HCT116 (cell line): ENCODE measurements at regions of chr2 and their contacts with region 1.

Region 1: GRCh38 chr2:141611-142010 is 95.3 kb upstream of the FAM110C start:
- DNase-seq: no peak
- ATAC-seq: no peak
- H3K4me3 ChIP-seq: no peak overlapping the region
- H3K27ac ChIP-seq: no peak overlapping the region
- H3K4me1 ChIP-seq: peaks cover 0 to 5% of the 10 kb centered on the region in 2 experiments; a peak in 2 of 4 replicates
- H3K27me3 ChIP-seq: peaks cover 6% of the 10 kb centered on the region; the same call in 1 of the 2 replicates
- CTCF ChIP-seq: no peak
- POLR2A ChIP-seq: no peak
- RAD21 ChIP-seq: no peak

Region 2: GRCh38 chr2:11248-11941 is 130.2 kb before region 1 on chr2:
- CTCF ChIA-PET with region 1: interaction called, 15 read pairs
- POLR2A ChIA-PET with region 1: no interaction called
- RAD21 ChIA-PET with region 1: interaction called in 1 of 2 experiments, 7 read pairs
- intact Hi-C with region 1: no loop called
- DNase-seq: peak; percentile 75
- ATAC-seq: peak; percentile 94
- H3K4me3 ChIP-seq: no peak overlapping the region
- H3K27ac ChIP-seq: no peak overlapping the region
- H3K4me1 ChIP-seq: no peaks in the 10 kb centered on the region
- H3K27me3 ChIP-seq: no peaks in the 10 kb centered on the region
- CTCF ChIP-seq: peak; percentile 95 to 99 (median 99)
- POLR2A ChIP-seq: no peak
- RAD21 ChIP-seq: peak; percentile 57

Region 3: DNA sequence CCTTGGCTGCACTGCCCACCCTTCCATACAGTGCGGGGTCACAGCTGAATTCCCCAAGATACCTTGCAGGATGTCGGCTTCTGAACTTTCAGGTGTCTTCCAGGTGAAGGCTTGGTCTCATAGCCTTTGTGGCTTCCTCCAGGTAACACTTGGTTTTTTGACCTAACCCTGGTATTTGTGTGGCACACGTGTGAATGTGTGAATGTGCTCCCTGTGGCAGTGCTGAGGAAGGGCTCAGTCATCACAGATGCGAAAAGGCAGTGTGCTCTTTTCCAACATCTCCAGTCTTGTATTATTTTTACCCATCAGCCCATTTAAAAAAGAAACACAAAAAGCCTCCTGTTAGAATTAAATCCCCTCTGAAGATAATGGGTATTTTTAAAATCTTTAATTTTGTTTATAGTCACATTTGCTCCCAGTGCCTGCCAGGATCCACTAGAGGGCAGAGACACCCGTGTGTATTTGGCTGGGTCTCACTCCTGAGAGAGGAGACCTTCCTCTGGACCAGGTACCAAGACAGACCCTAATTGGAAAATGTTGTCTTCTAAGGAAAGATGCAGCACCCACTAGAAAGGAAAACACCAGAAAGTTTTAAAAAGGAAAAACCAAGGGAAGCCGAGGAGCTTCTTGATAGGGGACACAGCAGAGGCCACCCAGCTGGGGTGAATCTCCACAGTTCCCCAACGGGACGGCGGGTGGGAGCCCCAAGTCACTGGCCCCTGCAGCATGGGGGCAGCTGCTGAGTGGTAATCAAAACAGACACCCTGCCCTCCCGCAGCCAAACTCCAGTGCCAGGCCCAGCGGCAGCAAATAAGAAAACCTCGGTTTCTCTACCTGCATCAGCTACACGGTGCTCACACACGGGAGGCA is 123.0 kb before region 1 on chr2:
- CTCF ChIA-PET with region 1: interaction called, 41 read pairs
- POLR2A ChIA-PET with region 1: interaction called, 4 read pairs
- RAD21 ChIA-PET with region 1: interaction called, 6 to 7 read pairs
- intact Hi-C with region 1: no loop called
- DNase-seq: no peak
- ATAC-seq: peak; percentile 87
- H3K4me3 ChIP-seq: no peak overlapping the region
- H3K27ac ChIP-seq: no peak overlapping the region
- H3K4me1 ChIP-seq: no peaks in the 10 kb centered on the region
- H3K27me3 ChIP-seq: no peaks in the 10 kb centered on the region
- CTCF ChIP-seq: peak; percentile 72 to 90 (median 84)
- POLR2A ChIP-seq: no peak
- RAD21 ChIP-seq: peak; percentile 93